ENCODE measurements at regions of chr16 and their contacts with region 1.

Region 1: DNA sequence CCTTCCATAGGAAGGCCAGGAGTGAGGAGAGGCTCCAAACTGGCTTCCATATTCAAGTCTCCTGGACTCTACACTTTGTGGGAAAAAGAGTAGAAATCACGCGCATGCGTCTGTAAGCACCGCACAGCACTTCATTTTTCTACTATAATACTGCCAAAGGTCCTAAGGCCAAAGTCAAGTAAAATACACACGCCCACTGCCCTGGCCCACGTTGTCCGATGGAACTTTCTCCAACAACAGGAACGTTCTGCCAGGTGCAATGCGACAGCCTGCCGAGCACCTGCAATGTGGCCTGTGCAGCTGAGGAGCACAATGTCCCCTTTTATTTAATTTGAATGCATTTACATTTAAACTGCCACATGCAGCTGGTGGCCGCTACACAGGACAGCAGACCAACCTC is 23.5 kb downstream of the DNASE1 start:
- DNase-seq: no peak
- H3K4me3 ChIP-seq: no peak overlapping the region
- H3K27ac ChIP-seq: no peak overlapping the region
- H3K4me1 ChIP-seq: peaks cover 12% of the 10 kb centered on the region
- H3K27me3 ChIP-seq: no peaks in the 10 kb centered on the region
- CTCF ChIP-seq: no peak
- POLR2A ChIP-seq: no peak

Region 2: DNA sequence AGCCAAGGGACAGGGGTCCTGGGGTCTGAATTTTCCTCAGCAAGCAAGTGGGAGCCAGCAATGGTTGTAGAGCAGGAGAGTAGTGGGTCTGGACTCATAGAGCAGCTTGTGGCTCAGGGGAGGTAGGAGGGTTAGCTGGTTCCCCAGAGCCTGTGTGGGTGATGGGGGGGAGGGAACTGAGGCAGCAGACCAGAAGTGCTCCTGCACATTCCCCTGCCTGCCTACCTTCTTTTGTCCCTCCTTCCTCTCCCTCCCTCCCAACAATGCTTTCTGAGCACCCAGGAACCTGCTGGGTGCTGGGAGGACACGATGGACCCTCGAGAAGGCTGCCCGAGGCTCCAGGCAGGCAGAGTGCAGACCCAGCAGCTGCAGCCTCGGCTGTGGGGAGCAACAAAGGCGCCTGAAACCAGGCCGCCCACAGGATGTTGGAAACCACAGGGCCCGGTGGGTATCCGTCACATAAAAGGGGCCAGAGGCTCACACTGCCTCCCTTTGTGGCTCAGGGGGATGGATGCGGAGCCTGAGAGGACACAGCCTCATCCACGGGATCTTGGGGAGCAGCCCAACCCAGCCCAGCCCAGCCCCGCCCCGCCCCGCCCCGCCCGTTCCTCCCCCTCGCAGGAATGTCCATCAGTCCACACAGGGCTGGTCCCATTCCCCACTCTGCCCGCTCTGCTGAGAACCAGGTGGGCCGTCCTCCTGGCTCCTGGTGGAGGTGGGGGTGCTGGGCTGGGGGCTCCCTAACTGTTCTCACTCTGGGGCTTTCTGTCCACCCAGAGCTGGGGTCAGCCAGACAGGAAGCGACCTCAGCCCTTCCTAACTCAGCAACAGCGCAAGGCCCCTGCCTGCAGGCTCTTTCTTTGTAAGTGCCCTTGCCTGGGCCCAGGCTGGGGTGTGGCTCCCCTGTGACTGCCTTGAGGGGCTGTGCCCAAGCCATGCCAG is 99.1 kb before region 1 on chr16:
- CTCF ChIA-PET with region 1: no interaction called
- POLR2A ChIA-PET with region 1: no interaction called
- dilution Hi-C with region 1: no loop called
- intact Hi-C with region 1: no loop called
- DNase-seq: no peak
- H3K4me3 ChIP-seq: no peak overlapping the region
- H3K27ac ChIP-seq: no peak overlapping the region
- H3K4me1 ChIP-seq: peaks cover 10% of the 10 kb centered on the region
- H3K27me3 ChIP-seq: no peaks in the 10 kb centered on the region
- CTCF ChIP-seq: no peak
- POLR2A ChIP-seq: no peak

Region 3: GRCh38 chr16:3654249-3654991 is 23.6 kb before region 1 on chr16 and contains the start of gene DNASE1:
- CTCF ChIA-PET with region 1: interaction called, 10 read pairs
- POLR2A ChIA-PET with region 1: no interaction called
- dilution Hi-C with region 1: no loop called
- intact Hi-C with region 1: no loop called
- DNase-seq: peak; percentile 42
- H3K4me3 ChIP-seq: no peak within 1 kb of the TSS
- H3K27ac ChIP-seq: no peak within 1 kb of the TSS
- H3K4me1 ChIP-seq: no peaks in the 10 kb centered on the region
- H3K27me3 ChIP-seq: no peaks in the 10 kb centered on the region
- CTCF ChIP-seq: peak; percentile 69 to 82
- POLR2A ChIP-seq: no peak
- total RNA-seq, gene DNASE1: 12.2 and 13.5 TPM in 2 replicates

Region 4: DNA sequence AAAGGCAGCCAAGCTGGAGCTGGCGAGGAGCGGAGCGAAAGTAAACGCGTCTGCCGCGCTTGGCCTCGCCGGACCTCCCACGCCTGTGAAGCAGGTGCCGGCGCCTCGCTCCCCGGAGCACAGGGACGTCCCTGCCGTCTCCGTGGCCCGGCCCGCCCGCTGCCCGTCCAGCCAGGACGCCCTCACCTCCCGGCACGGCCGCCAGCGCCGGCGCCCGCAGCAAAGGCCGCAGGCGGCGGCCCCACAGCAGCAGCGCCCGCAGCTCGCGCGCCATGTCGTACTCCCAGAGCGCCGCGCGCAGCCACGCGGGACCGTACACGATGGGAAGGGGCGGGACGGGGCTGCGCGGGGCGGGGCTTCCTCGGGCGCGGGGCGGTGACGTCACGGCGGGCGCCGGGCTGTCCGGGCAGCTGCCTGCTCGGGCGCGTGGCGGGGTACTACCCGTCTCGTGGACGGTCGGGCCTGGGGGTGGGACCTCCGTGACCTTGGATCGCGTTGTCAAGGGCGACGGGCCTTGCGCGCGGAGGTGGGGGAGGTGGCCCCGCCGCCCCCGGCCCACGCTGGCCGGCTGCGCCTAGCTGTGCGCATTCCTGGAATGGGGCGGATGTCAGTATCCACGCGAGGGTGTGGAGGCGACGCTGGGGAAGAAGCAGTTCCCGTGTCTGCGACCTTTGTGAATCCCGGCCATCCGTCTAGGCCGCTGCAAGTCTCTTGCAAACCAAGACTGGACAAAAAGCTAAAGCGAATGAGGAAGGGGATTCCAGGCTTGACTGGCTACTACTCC is 39.4 kb after region 1 on chr16 and contains the start of gene TRAP1:
- CTCF ChIA-PET with region 1: interaction called, 3 read pairs
- POLR2A ChIA-PET with region 1: no interaction called
- dilution Hi-C with region 1: no loop called
- intact Hi-C with region 1: loop called (anchors 1 kb)
- DNase-seq: peak; percentile 83
- H3K4me3 ChIP-seq: peak within 1 kb of the TSS; percentile 51 to 96 (median 79)
- H3K27ac ChIP-seq: peak within 1 kb of the TSS; percentile 71
- H3K4me1 ChIP-seq: peaks cover 14% of the 10 kb centered on the region
- H3K27me3 ChIP-seq: no peaks in the 10 kb centered on the region
- CTCF ChIP-seq: no peak
- POLR2A ChIP-seq: peak; percentile 86
- total RNA-seq, gene TRAP1: 102 and 109 TPM in 2 replicates